Colonic mucosa (tissue), 4 donors: ENCODE measurements at regions of chr12 and their contacts with region 1.

Region 1: GRCh38 chr12:48758221-48758620 is 30.7 kb downstream of the ADCY6 start:
- DNase-seq: no peak
- H3K4me3 ChIP-seq: no peak overlapping the region
- H3K27ac ChIP-seq: no peak overlapping the region
- H3K4me1 ChIP-seq: no peaks in the 10 kb centered on the region
- H3K27me3 ChIP-seq: no peaks in the 10 kb centered on the region
- CTCF ChIP-seq: no peak

Region 2: DNA sequence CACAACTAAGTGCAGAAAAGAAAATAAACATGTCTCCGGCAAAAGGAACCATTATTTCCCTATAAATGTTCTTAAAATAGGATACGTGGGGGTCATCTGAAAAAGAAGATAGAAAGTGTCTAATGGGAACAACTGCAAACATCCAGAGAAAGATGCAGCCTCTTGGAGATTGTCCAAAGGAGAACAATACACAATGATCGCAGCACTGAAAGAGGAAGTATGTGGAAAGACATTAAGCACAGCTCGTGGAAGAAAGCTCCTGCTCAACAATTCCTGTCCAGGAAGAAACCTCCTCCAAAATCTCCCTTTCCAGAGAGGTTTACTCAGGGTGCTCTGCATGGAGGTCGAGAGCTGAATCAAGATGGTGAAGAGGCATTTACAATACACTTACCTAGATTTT is 185.9 kb before region 1 on chr12:
- intact Hi-C with region 1: no loop called
- DNase-seq: no peak
- H3K4me3 ChIP-seq: no peak overlapping the region
- H3K27ac ChIP-seq: no peak overlapping the region
- H3K4me1 ChIP-seq: no peaks in the 10 kb centered on the region
- H3K27me3 ChIP-seq: no peaks in the 10 kb centered on the region
- CTCF ChIP-seq: no peak

Region 3: DNA sequence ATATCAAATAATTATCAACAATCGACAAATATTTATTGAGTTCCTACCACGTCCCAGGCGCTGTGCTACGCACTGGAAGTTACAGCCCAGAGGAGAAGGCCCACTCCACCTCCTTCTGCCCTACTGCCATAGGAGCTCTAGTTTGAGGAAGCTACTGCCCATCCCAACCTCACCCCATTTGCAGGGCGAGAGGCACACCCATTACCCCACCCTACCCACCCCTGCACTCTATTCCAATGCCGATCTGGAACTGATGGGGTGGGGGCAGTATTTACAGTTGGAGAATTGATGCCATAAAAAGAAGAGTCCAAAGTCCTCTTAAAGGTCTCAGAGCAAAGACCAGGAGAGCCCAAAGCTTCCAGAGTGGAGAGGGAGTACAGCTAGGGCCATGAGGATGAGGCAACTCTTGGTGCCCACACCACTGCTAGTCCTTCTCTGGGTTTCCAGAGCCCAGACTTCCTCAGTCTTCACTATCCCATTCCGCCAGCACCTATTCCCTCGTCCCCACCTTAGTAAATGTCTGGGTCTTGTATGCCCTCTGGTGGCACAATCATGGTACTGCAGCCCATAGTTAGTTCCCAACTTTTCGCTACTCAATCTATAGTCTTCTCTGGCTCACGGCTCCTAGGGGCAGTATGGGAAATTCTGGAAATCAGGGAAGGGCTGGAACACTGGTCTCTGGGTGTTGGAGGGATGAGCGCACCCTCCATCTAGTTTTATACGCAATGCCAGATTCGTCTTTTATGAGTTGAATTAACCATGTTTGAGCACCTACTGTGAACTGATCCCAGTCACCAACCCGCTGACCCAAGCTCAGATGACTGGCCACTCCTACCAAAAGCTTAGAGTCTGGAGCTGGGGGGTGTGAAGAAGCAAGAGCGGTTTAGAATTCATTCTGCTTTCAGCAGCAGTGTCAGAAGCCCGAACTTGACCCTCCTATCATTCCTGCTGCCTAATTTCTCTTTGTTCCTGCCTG is 37.5 kb after region 1 on chr12:
- intact Hi-C with region 1: loop called (anchors 2 kb)
- DNase-seq: peak; percentile 87
- H3K4me3 ChIP-seq: no peak overlapping the region
- H3K27ac ChIP-seq: peak overlapping the region; percentile 70
- H3K4me1 ChIP-seq: peaks cover 16% of the 10 kb centered on the region
- H3K27me3 ChIP-seq: no peaks in the 10 kb centered on the region
- CTCF ChIP-seq: peak; percentile 94

Region 4: GRCh38 chr12:48807981-48808380 is 49.8 kb after region 1 on chr12:
- intact Hi-C with region 1: no loop called
- DNase-seq: no peak
- H3K4me3 ChIP-seq: no peak overlapping the region
- H3K27ac ChIP-seq: no peak overlapping the region
- H3K4me1 ChIP-seq: no peaks in the 10 kb centered on the region
- H3K27me3 ChIP-seq: no peaks in the 10 kb centered on the region
- CTCF ChIP-seq: no peak

Region 5: GRCh38 chr12:48924617-48925303 is 166.5 kb after region 1 on chr12:
- intact Hi-C with region 1: no loop called
- DNase-seq: peak; percentile 61
- H3K4me3 ChIP-seq: peak overlapping the region; percentile 96
- H3K27ac ChIP-seq: peak overlapping the region; percentile 60
- H3K4me1 ChIP-seq: no peaks in the 10 kb centered on the region
- H3K27me3 ChIP-seq: no peaks in the 10 kb centered on the region
- CTCF ChIP-seq: peak; percentile 38